GM12878 (cell line): ENCODE measurements at regions of chr11 and their contacts with region 1.

Region 1: GRCh38 chr11:13462901-13463778 is at the start of gene BTBD10:
- DNase-seq: peak; percentile 89
- ATAC-seq: peak; percentile 97
- H3K4me3 ChIP-seq: peak within 1 kb of the TSS; percentile 90
- H3K27ac ChIP-seq: peak within 1 kb of the TSS; percentile 88
- H3K4me1 ChIP-seq: no peaks in the 10 kb centered on the region
- H3K27me3 ChIP-seq: no peaks in the 10 kb centered on the region
- CTCF ChIP-seq: no peak
- EP300 ChIP-seq: no peak
- POLR2A ChIP-seq: peak; percentile 99
- RAD21 ChIP-seq: no peak
- polyA plus RNA-seq, gene BTBD10: 25.4 to 25.6 TPM

Region 2: DNA sequence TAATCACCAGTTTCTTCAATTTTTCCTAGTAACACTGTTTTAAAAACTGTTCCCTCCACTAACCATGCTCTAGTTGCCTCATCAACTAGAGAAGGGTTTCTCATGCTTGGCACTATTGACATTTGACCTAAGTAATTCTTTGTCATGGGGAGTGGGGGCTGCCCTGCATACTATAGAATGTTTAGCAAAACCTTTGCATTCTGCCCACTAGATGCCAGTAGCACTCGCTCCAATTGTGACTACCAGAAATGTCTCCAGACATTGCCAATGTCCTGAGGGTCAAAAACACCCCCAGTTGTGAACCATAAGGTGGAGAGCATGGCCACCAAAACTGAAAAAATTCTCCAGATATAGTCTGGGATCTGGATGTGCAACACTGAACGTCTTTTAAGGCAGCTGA is 213.1 kb before region 1 on chr11:
- CTCF ChIA-PET with region 1: interaction called, 7 read pairs
- POLR2A ChIA-PET with region 1: no interaction called
- RAD21 ChIA-PET with region 1: interaction called, 3 read pairs
- SMC1A ChIA-PET with region 1: interaction called, 11 read pairs
- in situ Hi-C with region 1: no loop called
- intact Hi-C with region 1: no loop called
- DNase-seq: no peak
- ATAC-seq: peak; percentile 89
- H3K4me3 ChIP-seq: no peak overlapping the region
- H3K27ac ChIP-seq: no peak overlapping the region
- H3K4me1 ChIP-seq: no peaks in the 10 kb centered on the region
- H3K27me3 ChIP-seq: no peaks in the 10 kb centered on the region; a peak in 2 of 4 replicates
- CTCF ChIP-seq: peak; percentile 43 to 65 (median 49); a peak in 4 of 6 replicates
- EP300 ChIP-seq: no peak
- POLR2A ChIP-seq: no peak
- RAD21 ChIP-seq: peak; percentile 57

Region 3: DNA sequence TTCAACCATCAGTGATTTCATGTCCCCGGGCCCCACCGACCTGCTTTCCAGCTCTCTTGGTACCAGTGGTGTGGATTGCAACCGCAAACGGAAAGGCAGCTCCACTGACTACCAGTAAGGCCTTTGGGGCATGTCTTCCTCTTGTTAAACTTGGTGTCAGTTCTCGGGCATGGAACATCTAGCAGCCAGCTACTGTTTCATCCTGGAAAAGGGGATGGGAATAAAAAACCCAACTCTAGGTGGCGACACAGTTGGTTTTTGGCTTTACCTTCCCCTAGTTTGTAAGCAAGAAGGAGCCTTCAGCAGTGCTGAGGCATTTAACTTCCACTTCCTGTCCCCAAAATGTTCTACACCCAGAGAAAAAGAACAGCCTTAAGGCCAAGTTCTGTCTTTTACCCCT is 108.8 kb before region 1 on chr11:
- CTCF ChIA-PET with region 1: interaction called, 12 read pairs
- POLR2A ChIA-PET with region 1: no interaction called
- RAD21 ChIA-PET with region 1: no interaction called
- SMC1A ChIA-PET with region 1: interaction called, 5 read pairs
- in situ Hi-C with region 1: no loop called
- intact Hi-C with region 1: no loop called
- DNase-seq: no peak
- ATAC-seq: peak; percentile 22; the same call in 2 of the 3 replicates
- H3K4me3 ChIP-seq: no peak overlapping the region
- H3K27ac ChIP-seq: no peak overlapping the region
- H3K4me1 ChIP-seq: no peaks in the 10 kb centered on the region
- H3K27me3 ChIP-seq: no peaks in the 10 kb centered on the region
- CTCF ChIP-seq: peak; percentile 23 to 30 (median 29); a peak in 4 of 6 replicates
- EP300 ChIP-seq: no peak
- POLR2A ChIP-seq: no peak
- RAD21 ChIP-seq: no peak

Region 4: DNA sequence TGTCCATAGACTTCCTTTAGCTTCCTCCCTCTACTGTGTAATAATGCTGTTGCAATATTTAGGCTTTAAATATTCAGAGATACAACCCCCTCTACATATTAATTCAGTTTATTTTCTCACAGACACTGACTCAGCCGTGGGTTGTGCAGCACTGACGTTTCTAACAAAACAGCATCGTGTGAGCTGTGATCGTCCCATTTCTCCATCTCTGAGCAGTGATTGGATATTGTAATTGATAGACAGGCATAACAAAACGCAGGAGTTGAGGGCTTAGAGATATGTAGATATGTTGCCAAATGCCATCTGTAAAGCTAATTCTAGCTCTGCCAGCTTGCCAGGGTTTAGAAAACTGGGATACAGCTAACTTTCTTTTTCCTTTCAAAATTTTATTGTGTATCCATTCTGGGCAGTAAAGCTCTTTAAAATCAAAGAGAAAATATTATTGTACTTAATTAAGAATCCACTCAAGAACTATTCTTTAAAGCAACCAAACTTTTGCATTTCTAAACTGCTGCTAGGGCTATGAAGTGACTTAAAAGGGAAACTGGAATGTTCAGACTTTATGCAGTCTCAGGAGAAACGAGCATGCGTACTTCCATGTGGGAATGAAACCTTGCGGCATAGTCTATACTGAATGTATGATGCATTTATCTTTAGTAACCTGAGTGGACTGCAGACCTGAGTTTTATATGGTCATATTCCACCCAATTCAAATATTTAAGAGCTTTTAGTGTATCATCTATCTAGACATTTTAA is 22.9 kb before region 1 on chr11:
- CTCF ChIA-PET with region 1: interaction called, 4 read pairs
- POLR2A ChIA-PET with region 1: interaction called, 11 read pairs
- RAD21 ChIA-PET with region 1: no interaction called
- SMC1A ChIA-PET with region 1: interaction called, 3 read pairs
- in situ Hi-C with region 1: no loop called
- intact Hi-C with region 1: no loop called
- DNase-seq: no peak
- ATAC-seq: no peak
- H3K4me3 ChIP-seq: no peak overlapping the region
- H3K27ac ChIP-seq: no peak overlapping the region
- H3K4me1 ChIP-seq: no peaks in the 10 kb centered on the region
- H3K27me3 ChIP-seq: no peaks in the 10 kb centered on the region
- CTCF ChIP-seq: no peak
- EP300 ChIP-seq: no peak
- POLR2A ChIP-seq: no peak
- RAD21 ChIP-seq: no peak

Region 5: DNA sequence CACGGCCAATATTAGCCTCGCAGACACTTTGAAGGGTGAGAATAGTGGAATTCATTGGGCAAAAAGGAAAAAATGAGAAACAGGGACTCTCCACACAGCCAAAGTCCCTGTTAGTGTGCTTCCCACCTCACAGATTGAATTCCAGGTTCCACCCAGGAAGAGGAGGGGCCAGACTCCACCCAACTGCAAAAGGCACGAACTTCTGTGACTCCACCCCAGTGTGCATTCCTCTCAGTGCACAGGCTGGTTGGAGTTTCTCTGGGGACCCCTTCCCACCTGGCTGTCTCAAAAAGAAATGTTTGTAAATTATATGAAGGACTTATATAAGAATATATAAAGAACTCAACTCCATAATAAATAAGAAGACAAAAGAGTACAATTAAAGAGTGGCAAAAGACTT is 12.0 kb after region 1 on chr11:
- CTCF ChIA-PET with region 1: interaction called, 11 read pairs
- POLR2A ChIA-PET with region 1: interaction called, 4 read pairs
- RAD21 ChIA-PET with region 1: interaction called, 3 read pairs
- SMC1A ChIA-PET with region 1: no interaction called
- in situ Hi-C with region 1: no loop called
- intact Hi-C with region 1: no loop called
- DNase-seq: no peak
- ATAC-seq: no peak
- H3K4me3 ChIP-seq: no peak overlapping the region
- H3K27ac ChIP-seq: no peak overlapping the region
- H3K4me1 ChIP-seq: no peaks in the 10 kb centered on the region
- H3K27me3 ChIP-seq: no peaks in the 10 kb centered on the region
- CTCF ChIP-seq: no peak
- EP300 ChIP-seq: no peak
- POLR2A ChIP-seq: no peak
- RAD21 ChIP-seq: no peak

Region 6: GRCh38 chr11:13717331-13717730 is 254.2 kb after region 1 on chr11:
- CTCF ChIA-PET with region 1: no interaction called
- POLR2A ChIA-PET with region 1: no interaction called
- RAD21 ChIA-PET with region 1: no interaction called
- SMC1A ChIA-PET with region 1: no interaction called
- in situ Hi-C with region 1: no loop called
- intact Hi-C with region 1: no loop called
- DNase-seq: no peak
- ATAC-seq: no peak
- H3K4me3 ChIP-seq: no peak overlapping the region
- H3K27ac ChIP-seq: no peak overlapping the region
- H3K4me1 ChIP-seq: no peaks in the 10 kb centered on the region
- H3K27me3 ChIP-seq: no peaks in the 10 kb centered on the region
- CTCF ChIP-seq: no peak
- EP300 ChIP-seq: no peak
- POLR2A ChIP-seq: no peak
- RAD21 ChIP-seq: no peak